CD4-positive, alpha-beta T cell (primary cell): ENCODE measurements at regions of chr1 and their contacts with region 1.

Region 1: GRCh38 chr1:180939711-180940103 is 27.0 kb downstream of the KIAA1614 start:
- DNase-seq: no peak
- ATAC-seq: no peak
- H3K4me3 ChIP-seq: no peak overlapping the region
- H3K4me3 Mint-ChIP-seq: no peak overlapping the region
- H3K27ac ChIP-seq: no peak overlapping the region
- H3K27ac Mint-ChIP-seq: no peak overlapping the region
- H3K4me1 ChIP-seq: no peaks in the 10 kb centered on the region
- H3K4me1 Mint-ChIP-seq: no peaks in the 10 kb centered on the region
- H3K27me3 ChIP-seq: no peaks in the 10 kb centered on the region
- H3K27me3 Mint-ChIP-seq: no peaks in the 10 kb centered on the region
- CTCF ChIP-seq: no peak

Region 2: DNA sequence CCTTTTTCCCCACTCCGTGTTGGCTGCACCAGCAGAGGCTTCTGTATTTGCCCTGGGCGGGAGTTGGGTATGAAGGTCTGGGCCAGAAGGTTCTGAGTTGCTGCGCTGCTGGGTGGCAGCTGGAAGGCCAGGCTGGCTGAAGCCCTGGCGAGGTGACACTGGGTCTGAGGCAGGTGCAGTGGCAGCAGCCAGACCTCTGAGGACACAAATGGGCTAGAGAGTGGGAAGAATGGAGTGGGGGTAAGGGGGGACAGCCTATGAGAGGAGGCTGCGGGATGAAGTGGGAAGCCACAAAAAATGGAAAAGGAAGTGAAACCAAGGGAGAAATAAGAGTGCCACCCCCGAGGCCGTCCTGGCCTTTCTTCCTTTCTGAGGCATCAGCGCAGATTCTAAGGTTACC is 29.7 kb after region 1 on chr1:
- CTCF ChIA-PET with region 1: no interaction called
- POLR2A ChIA-PET with region 1: no interaction called
- intact Hi-C with region 1: loop called in 1 of 2 experiments (anchors 2 kb)
- DNase-seq: peak in 1 of 14 experiments; percentile 12
- ATAC-seq: no peak
- H3K4me3 ChIP-seq: no peak overlapping the region
- H3K4me3 Mint-ChIP-seq: no peak overlapping the region
- H3K27ac ChIP-seq: no peak overlapping the region
- H3K27ac Mint-ChIP-seq: no peak overlapping the region
- H3K4me1 ChIP-seq: no peaks in the 10 kb centered on the region
- H3K4me1 Mint-ChIP-seq: peaks cover 4% of the 10 kb centered on the region
- H3K27me3 ChIP-seq: no peaks in the 10 kb centered on the region
- H3K27me3 Mint-ChIP-seq: no peaks in the 10 kb centered on the region
- CTCF ChIP-seq: no peak